Right ventricle myocardium superior (tissue), 1 donor: ENCODE measurements at regions of chr15 and their contacts with region 1.

Region 1: DNA sequence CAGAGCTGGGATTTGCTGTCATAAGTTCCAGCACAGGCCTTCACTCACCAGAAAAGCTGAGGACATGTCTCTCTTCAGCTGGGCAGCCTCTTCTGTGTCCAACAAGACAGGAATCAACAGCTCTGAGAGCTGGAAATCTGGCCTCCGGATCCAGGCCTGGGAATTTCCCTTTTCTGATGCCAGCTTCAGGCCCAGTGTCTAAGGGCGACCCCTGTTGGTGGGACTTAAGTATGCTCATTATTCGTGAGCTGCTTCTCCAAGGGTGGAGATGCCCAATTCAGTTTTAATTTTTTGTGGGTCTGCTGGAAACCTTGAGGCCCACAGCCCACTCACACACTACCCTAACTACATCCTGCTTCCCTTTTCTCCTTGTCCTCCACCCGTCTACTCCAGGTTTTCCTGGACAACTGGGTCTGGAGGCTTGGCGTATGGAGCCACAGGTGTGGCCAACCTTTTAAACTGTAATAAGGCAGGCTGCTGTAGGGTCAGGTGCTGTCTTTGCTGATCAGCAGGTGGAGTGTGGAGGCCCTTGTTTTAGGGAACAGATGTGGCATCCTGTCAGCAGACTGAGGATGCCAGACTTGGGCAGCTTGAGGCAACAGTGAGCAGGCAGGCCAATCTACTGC is 2.6 kb upstream of the CEMIP start:
- DNase-seq: peak; percentile 62
- ATAC-seq: peak; percentile 64

Region 2: GRCh38 chr15:80455668-80456442 is 320.7 kb before region 1 on chr15:
- intact Hi-C with region 1: loop called (anchors 5 kb)
- DNase-seq: peak; percentile 52
- ATAC-seq: peak; percentile 85

Region 3: GRCh38 chr15:80567721-80568157 is 208.8 kb before region 1 on chr15:
- intact Hi-C with region 1: loop called (anchors 5 kb)
- DNase-seq: no peak
- ATAC-seq: peak; percentile 84

Region 4: DNA sequence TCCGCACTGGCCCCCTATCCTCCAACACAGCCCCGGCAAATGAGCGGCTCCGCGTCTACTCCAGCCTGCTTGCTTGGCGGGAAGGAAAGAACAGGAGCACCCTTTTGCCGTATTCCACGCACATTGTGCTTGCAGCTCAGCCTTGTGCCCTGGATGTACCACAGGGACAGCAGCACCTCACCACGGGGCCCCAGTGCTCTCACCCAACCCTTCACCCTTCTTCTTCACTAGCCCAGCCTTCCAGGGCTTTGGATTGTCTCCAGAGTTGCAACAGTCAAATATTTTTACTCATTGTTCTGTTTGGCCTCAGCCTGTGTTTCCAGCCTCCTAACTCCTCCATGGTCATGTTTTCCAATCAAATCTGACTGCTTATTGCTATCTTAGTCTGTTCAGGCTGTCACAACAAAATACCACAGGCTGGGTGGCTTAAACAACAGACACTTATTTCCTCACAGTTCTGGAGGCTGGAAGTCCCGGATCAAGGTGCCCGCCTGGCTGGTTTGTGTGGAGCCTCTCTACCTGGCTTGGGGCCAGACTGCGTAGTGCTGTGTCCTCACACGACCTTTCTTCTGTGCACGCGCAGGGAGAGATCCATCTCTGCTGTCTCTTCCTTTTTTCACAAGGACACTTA is 160.7 kb before region 1 on chr15:
- intact Hi-C with region 1: loop called (anchors 5 kb)
- DNase-seq: peak; percentile 81
- ATAC-seq: peak; percentile 73

Region 5: DNA sequence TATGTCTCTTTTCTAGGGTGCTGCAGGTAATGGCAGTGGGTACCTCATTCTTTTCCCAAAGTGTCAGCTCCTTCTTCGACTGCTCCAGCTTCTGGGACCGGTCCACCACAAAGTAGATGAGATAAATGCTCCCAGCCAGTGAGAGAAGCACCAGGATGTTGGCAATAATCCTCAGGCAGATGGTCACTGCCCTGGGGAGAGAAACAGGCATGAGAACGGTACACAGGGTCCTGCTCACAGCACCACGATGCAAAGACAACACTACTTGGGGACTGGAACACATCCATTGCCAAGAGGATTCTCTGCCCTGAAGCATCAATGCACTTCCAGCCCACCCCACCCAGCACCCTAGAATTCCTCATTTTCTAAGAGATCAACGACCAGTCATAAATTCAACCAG is 575.1 kb after region 1 on chr15:
- intact Hi-C with region 1: no loop called
- DNase-seq: no peak
- ATAC-seq: no peak